ENCODE measurements at regions of chr6 and their contacts with region 1.

Region 1: GRCh38 chr6:52020945-52021570 is 66.4 kb downstream of the PKHD1 start:
- DNase-seq: no peak
- ATAC-seq: no peak

Region 2: GRCh38 chr6:51855310-51856082 is 165.6 kb before region 1 on chr6:
- intact Hi-C with region 1: loop called in 1 of 2 experiments (anchors 5 kb)
- DNase-seq: no peak
- ATAC-seq: peak; percentile 48